HEK293T (cell line): ENCODE measurements at regions of chr4 and their contacts with region 1.

Region 1: GRCh38 chr4:121823505-121824170 is at the start of gene CCNA2:
- DNase-seq: peak; percentile 91

Region 2: DNA sequence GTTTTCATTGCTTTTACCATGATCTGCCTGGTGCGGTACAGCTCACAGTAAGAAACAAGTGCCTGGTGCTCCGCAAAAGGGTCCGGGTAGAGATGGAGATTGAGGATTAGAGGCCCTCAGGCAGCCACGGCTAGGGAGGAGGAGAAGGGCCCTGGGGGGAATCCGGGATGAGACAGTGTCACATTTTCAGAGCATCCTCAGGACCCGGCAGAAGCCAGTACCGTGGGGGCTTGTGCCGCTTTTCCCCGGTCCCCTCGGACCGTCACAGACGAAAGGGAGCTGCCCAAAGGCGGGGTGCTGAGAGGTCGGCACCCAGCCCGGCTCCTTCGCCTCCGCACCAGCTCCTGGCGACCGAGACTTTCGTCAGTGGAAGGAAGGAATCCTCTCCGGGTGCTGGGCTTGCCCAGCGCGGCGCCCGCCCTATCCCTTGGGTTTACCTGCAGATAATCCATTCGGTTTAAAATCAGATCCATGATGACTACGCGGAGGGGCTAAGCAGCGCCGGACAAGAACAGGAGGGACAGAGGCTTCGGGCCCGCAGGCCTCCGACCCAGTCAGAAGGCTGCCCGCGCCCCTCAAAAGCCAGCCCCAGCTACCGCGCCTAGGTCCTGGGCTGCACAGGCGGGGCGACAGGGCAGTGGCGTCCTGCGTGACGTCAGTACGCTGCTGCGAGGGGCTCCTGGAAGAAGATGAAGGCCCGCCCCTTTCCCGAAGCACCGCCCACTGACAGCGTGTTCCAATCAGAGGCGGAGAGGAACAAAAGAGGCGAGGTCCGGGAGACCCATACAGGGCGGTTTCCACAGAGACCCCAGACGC is 46.4 kb after region 1 on chr4 and contains the start of gene BBS7:
- CTCF ChIA-PET with region 1: no interaction called
- POLR2A ChIA-PET with region 1: interaction called, 11 read pairs
- DNase-seq: peak; percentile 97